ENCODE measurements at regions of chr5 and their contacts with region 1.

Region 1: DNA sequence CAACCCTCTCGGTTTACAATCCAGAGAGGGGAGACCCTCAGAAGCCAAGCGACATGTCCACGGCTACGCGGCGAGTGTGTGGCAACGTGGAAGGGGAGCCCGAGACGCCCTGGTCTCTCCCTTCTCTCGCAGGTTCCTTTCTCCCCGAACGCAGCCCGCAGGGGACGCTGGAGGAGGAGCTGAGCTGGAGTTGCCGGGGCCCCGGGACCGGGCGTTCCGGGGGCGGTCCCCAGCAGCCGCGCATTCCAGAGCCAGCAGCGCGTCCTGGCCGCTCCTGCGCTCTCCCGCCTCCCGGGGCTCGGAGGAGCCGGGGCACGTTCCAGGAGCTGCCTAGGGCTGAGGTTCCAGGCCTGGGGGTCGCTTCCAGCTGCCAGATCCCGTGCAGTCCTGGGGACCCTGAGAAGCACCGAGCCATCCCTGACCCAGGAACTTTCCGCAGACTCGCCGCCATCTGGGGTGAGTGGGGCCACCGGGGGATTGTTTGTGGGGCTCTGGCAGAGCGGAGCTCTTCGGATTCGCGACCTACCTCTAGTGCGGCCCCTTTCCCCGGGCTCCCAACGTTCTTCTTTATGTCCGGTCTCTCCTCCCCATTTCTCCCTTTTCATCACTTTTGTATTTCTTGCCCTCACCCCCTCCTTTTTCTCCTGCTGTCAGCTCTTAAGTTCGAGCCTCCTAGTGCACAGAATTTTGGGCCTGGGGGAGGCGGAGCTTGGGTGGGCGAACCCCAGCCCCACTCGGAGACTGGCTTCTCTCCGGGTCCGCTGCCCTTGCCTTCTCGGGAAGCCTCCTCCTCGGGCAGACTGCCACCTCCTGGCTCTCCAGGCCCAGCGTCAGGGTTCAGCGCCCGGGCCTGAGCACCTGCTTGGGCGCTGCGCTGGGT is at the start of gene SMIM3:
- DNase-seq: peak; percentile 84
- H3K4me3 Mint-ChIP-seq: peak within 1 kb of the TSS; percentile 99
- H3K27ac Mint-ChIP-seq: peak within 1 kb of the TSS; percentile 84
- H3K4me1 Mint-ChIP-seq: peaks cover 52% of the 10 kb centered on the region
- H3K27me3 Mint-ChIP-seq: no peaks in the 10 kb centered on the region
- total RNA-seq, gene SMIM3: 22.4 to 22.8 TPM

Region 2: GRCh38 chr5:150458819-150459557 is 319.8 kb before region 1 on chr5:
- CTCF ChIA-PET with region 1: no interaction called
- POLR2A ChIA-PET with region 1: no interaction called
- intact Hi-C with region 1: loop called (anchors 5 kb)
- DNase-seq: peak; percentile 91
- H3K4me3 Mint-ChIP-seq: peak overlapping the region; percentile 53
- H3K27ac Mint-ChIP-seq: no peak overlapping the region
- H3K4me1 Mint-ChIP-seq: peaks cover 11% of the 10 kb centered on the region
- H3K27me3 Mint-ChIP-seq: no peaks in the 10 kb centered on the region

Region 3: GRCh38 chr5:150700594-150701293 is 78.0 kb before region 1 on chr5 and contains the start of gene RBM22:
- CTCF ChIA-PET with region 1: interaction called, 38 read pairs
- POLR2A ChIA-PET with region 1: interaction called, 13 read pairs
- intact Hi-C with region 1: loop called (anchors 1 kb)
- DNase-seq: peak; percentile 95
- H3K4me3 Mint-ChIP-seq: no peak within 1 kb of the TSS
- H3K27ac Mint-ChIP-seq: no peak within 1 kb of the TSS
- H3K4me1 Mint-ChIP-seq: peaks cover 7% of the 10 kb centered on the region
- H3K27me3 Mint-ChIP-seq: no peaks in the 10 kb centered on the region
- total RNA-seq, gene RBM22: 59.6 to 66.4 TPM

Region 4: GRCh38 chr5:150758531-150759333 is 20.0 kb before region 1 on chr5 and contains the start of gene DCTN4:
- CTCF ChIA-PET with region 1: interaction called, 30 read pairs
- POLR2A ChIA-PET with region 1: interaction called, 9 read pairs
- intact Hi-C with region 1: loop called (anchors 1 kb)
- DNase-seq: peak; percentile 96
- H3K4me3 Mint-ChIP-seq: no peak within 1 kb of the TSS
- H3K27ac Mint-ChIP-seq: no peak within 1 kb of the TSS
- H3K4me1 Mint-ChIP-seq: peaks cover 29% of the 10 kb centered on the region
- H3K27me3 Mint-ChIP-seq: peaks cover 2% of the 10 kb centered on the region
- total RNA-seq, gene DCTN4: 32.2 to 32.9 TPM

Region 5: GRCh38 chr5:150801117-150801927 is 22.6 kb after region 1 on chr5:
- CTCF ChIA-PET with region 1: interaction called, 14 read pairs
- POLR2A ChIA-PET with region 1: interaction called, 3 read pairs
- intact Hi-C with region 1: no loop called
- DNase-seq: peak; percentile 16
- H3K4me3 Mint-ChIP-seq: no peak overlapping the region
- H3K27ac Mint-ChIP-seq: no peak overlapping the region
- H3K4me1 Mint-ChIP-seq: peaks cover 13% of the 10 kb centered on the region
- H3K27me3 Mint-ChIP-seq: peaks cover 8% of the 10 kb centered on the region

Region 6: GRCh38 chr5:151937841-151938240 is 1159.1 kb after region 1 on chr5:
- CTCF ChIA-PET with region 1: no interaction called
- POLR2A ChIA-PET with region 1: no interaction called
- intact Hi-C with region 1: no loop called
- DNase-seq: no peak
- H3K4me3 Mint-ChIP-seq: no peak overlapping the region
- H3K27ac Mint-ChIP-seq: no peak overlapping the region
- H3K4me1 Mint-ChIP-seq: no peaks in the 10 kb centered on the region
- H3K27me3 Mint-ChIP-seq: no peaks in the 10 kb centered on the region

Measured in activated CD4-positive, alpha-beta memory T cell treated with anti-CD3 and anti-CD28 coated beads for 36 hours (primary cell).